Ovary (tissue), 10 donors: ENCODE measurements at regions of chr11 and their contacts with region 1.

Region 1: GRCh38 chr11:82718307-82718706 is 15.4 kb downstream of the FAM181B start:
- DNase-seq: peak in 2 of 5 donors; percentile 28 to 31
- H3K4me3 ChIP-seq: no peak overlapping the region
- H3K27ac ChIP-seq: no peak overlapping the region
- H3K4me1 ChIP-seq: peaks cover 1% of the 10 kb centered on the region
- H3K27me3 ChIP-seq: no peaks in the 10 kb centered on the region
- CTCF ChIP-seq: peak in 2 of 3 donors; percentile 47 to 52
- EP300 ChIP-seq: no peak
- POLR2A ChIP-seq: no peak

Region 2: GRCh38 chr11:82867495-82868082 is 149.3 kb after region 1 on chr11:
- intact Hi-C with region 1: loop called in 1 of 4 experiments (anchors 10 kb)
- DNase-seq: peak; percentile 56 to 84 (median 66)
- H3K4me3 ChIP-seq: no peak overlapping the region
- H3K27ac ChIP-seq: no peak overlapping the region
- H3K4me1 ChIP-seq: peaks cover 6% of the 10 kb centered on the region
- H3K27me3 ChIP-seq: no peaks in the 10 kb centered on the region
- CTCF ChIP-seq: peak; percentile 43 to 58 (median 50)
- EP300 ChIP-seq: no peak
- POLR2A ChIP-seq: no peak

Region 3: GRCh38 chr11:83819933-83820549 is 1101.7 kb after region 1 on chr11:
- intact Hi-C with region 1: loop called in 1 of 4 experiments (anchors 10 kb)
- DNase-seq: no peak
- H3K4me3 ChIP-seq: no peak overlapping the region
- H3K27ac ChIP-seq: no peak overlapping the region
- H3K4me1 ChIP-seq: no peaks in the 10 kb centered on the region
- H3K27me3 ChIP-seq: no peaks in the 10 kb centered on the region
- CTCF ChIP-seq: peak; percentile 33 to 58 (median 47)
- EP300 ChIP-seq: no peak
- POLR2A ChIP-seq: no peak